Activated T-helper 2 cell treated with anti-CD3 and anti-CD28 coated beads, Interferon-gamma antibody, Interleukin-2, Interleukin-4, amounts not matched to agents 10 μg/mL and 5 μg/mL and 100 μg/mL, durations not matched to agents 14 hours and 24 hours and 36 hours (primary cell): ENCODE measurements at regions of chr9 and their contacts with region 1.

Region 1: DNA sequence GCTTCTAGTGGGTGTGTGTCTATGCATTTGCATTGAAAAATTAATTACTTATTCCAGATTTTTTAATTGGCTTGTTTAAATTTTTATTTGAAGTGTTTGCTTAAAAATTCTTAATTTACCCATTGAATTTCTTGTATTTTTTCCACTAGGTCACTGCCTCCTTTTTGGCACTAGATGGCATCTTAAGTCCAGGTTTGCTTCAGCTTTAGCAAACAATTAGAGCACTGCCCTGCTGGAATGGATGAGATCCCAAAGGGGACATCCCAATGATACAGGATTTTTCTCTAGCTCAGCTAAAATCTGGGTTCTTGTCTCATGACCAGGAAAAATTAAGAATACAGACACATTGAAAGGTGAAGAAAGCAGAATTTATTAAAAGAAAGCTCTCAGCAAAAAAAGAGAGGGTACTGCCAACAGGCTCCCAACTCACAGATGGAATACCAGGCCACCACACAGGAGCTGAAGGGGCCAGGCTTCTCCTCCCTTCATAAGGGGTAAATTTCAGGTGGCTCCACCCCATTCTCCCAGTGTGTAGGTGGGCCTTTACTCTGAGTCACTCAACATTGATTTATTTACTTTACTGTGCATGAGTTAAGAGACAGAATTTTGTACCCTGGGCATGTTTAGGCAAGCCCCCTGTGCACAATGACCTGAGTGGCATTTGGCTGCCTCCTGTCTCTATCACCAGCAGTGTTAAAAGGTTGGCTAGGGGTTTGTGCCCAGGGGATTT is 532.4 kb downstream of the ANXA1 start:
- DNase-seq: no peak
- H3K4me3 Mint-ChIP-seq: no peak overlapping the region
- H3K27ac Mint-ChIP-seq: no peak overlapping the region
- H3K4me1 Mint-ChIP-seq: no peaks in the 10 kb centered on the region
- H3K27me3 Mint-ChIP-seq: no peaks in the 10 kb centered on the region

Region 2: GRCh38 chr9:73615557-73615956 is 68.5 kb before region 1 on chr9:
- intact Hi-C with region 1: no loop called
- DNase-seq: no peak
- H3K4me3 Mint-ChIP-seq: no peak overlapping the region
- H3K27ac Mint-ChIP-seq: no peak overlapping the region
- H3K4me1 Mint-ChIP-seq: no peaks in the 10 kb centered on the region
- H3K27me3 Mint-ChIP-seq: no peaks in the 10 kb centered on the region

Region 3: DNA sequence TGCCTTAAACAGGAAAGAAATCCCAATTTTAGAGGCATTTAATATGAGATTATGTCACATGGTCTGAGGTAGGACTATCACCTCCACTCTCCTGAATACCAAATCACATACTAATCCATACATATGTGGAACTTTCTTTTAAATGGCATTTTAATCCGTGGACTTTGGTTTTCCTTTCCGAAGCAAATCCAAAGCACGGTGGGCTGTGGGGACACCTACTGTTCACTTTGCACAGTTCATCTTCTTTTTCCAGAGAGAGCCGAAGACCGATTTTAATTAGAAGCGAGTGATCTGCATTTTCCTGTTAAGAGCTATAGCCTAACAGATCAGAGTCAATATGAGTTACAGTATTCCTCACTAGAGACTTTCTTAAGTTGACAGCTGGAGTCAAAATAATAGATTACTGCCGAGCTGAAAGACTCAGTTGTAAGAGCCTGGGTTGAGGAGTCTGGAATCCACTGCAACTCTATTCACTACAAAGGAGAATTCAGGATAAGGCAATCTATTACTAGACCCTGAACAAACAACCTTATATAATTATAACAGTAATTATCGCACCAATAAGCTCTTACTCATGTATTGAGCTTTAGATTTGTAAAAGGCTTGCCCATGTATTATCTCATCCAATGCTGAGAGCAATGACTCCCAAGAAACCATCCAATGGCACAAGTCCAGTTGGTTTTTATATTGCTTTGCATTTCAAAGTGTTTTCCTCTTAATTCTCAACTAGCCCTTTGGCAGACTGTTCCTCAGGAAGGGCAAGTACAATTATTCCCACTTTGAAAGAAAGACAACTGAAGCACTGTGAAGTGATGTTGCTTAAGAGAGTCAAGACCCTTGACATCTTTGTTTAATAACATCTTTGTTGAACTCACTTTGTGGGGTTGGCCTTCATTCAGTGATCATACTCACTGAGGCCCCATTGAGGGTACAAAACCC is 1059.0 kb after region 1 on chr9:
- intact Hi-C with region 1: loop called (anchors 10 kb)
- DNase-seq: no peak
- H3K4me3 Mint-ChIP-seq: no peak overlapping the region
- H3K27ac Mint-ChIP-seq: no peak overlapping the region
- H3K4me1 Mint-ChIP-seq: no peaks in the 10 kb centered on the region
- H3K27me3 Mint-ChIP-seq: peaks cover 16% of the 10 kb centered on the region